ENCODE measurements at regions of chr20 and their contacts with region 1.

Region 1: DNA sequence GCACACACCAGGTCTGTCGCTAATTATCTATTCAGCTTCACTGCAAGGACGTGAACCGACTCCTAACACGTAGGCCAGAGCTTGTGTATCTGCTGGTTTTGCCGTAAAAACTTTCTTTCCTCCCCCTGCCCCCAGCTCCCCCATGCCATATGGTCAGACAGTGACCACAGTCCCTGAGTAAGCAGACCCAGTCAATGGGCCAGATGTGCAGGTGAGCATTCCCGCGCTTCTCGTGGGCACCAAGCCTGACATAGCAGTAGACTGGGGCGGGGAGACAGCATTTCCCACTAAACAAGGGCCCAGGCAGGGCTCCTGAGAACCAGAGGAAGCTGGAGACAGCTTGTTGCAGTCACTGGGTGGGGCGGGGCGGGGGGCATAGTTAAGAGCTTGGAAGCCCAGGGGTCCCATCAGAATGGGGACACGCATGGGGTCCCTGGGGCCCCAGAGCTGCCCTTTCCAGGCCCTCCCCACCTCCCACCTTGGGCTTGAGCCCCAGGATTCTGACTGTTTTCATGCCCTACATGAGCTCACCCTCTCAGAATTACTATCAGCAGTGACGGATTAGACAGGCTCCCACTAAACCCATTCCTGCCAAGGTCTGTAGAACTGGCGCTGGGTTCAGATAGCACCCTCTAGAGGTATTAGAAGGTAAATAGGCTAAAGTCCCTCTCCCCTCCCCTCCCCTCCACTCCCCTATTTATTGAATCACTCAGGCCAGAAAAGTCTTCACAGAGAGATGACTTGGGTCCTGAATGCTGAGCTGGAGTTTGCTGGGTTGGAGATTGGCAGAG is 51.8 kb downstream of the CDH26 start:
- DNase-seq: no peak
- ATAC-seq: peak; percentile 52; the same call in 2 of the 3 replicates
- H3K4me3 ChIP-seq: no peak overlapping the region
- H3K27ac ChIP-seq: no peak overlapping the region
- H3K4me1 ChIP-seq: no peaks in the 10 kb centered on the region
- H3K27me3 ChIP-seq: no peaks in the 10 kb centered on the region
- CTCF ChIP-seq: peak; percentile 8 to 34 (median 11); a peak in 3 of 6 replicates
- EP300 ChIP-seq: no peak
- POLR2A ChIP-seq: no peak
- RAD21 ChIP-seq: no peak

Region 2: DNA sequence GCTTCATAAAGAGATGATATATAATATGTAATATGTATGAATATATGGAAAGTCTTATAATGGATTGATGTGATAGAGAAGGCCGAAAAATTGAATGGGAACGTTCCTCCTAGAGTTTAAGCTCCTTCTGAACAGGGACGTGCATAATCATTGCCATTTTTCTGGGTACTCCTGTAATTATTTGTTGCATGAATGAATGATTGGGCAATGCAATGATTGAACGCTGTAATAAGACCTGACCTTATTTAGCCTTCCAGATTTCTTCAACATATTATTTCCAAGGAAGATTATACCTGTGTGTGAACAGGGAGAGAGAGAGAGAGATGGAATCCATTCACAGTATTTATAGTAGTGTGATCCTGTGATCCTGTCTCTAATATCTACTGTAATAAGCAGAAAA is 68.4 kb before region 1 on chr20:
- CTCF ChIA-PET with region 1: no interaction called
- POLR2A ChIA-PET with region 1: no interaction called
- RAD21 ChIA-PET with region 1: no interaction called
- SMC1A ChIA-PET with region 1: no interaction called
- in situ Hi-C with region 1: no loop called
- intact Hi-C with region 1: no loop called
- DNase-seq: no peak
- ATAC-seq: no peak
- H3K4me3 ChIP-seq: no peak overlapping the region; the same call in 1 of the 2 replicates
- H3K27ac ChIP-seq: no peak overlapping the region
- H3K4me1 ChIP-seq: peaks cover 10% of the 10 kb centered on the region
- H3K27me3 ChIP-seq: no peaks in the 10 kb centered on the region
- CTCF ChIP-seq: no peak
- EP300 ChIP-seq: no peak
- POLR2A ChIP-seq: no peak
- RAD21 ChIP-seq: no peak

Region 3: GRCh38 chr20:59992596-59992995 is 17.4 kb before region 1 on chr20:
- CTCF ChIA-PET with region 1: interaction called, 12 read pairs
- POLR2A ChIA-PET with region 1: no interaction called
- RAD21 ChIA-PET with region 1: no interaction called
- SMC1A ChIA-PET with region 1: no interaction called
- in situ Hi-C with region 1: no loop called
- intact Hi-C with region 1: no loop called
- DNase-seq: no peak
- ATAC-seq: no peak
- H3K4me3 ChIP-seq: no peak overlapping the region
- H3K27ac ChIP-seq: no peak overlapping the region
- H3K4me1 ChIP-seq: no peaks in the 10 kb centered on the region
- H3K27me3 ChIP-seq: no peaks in the 10 kb centered on the region
- CTCF ChIP-seq: 0 out of 6 replicates have a peak, but pooled peaks of 1 of the 3 experiments have one; percentile 8
- EP300 ChIP-seq: no peak
- POLR2A ChIP-seq: no peak
- RAD21 ChIP-seq: no peak

Region 4: DNA sequence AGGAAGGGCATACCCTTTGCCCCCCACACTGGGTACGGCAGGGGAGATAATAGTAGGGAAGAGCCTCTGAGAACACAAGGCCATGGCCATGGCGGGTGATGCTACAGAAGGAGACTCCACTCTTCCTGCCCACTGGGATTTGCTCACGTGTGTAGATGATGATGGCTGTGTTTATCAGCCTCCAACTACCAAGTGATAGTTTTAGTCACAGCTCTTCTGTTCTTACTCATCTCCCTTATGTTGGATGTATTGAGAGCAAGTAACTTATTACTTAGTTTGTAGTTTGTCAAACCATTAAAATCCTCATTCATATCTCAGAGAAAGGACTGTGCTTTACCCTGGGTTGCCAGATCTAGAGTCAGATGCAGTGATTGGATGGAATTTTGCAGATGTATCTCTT is 14.2 kb after region 1 on chr20:
- CTCF ChIA-PET with region 1: interaction called, 10 read pairs
- POLR2A ChIA-PET with region 1: interaction called, 3 read pairs
- RAD21 ChIA-PET with region 1: no interaction called
- SMC1A ChIA-PET with region 1: interaction called, 5 read pairs
- in situ Hi-C with region 1: no loop called
- intact Hi-C with region 1: no loop called
- DNase-seq: no peak
- ATAC-seq: no peak
- H3K4me3 ChIP-seq: no peak overlapping the region
- H3K27ac ChIP-seq: no peak overlapping the region
- H3K4me1 ChIP-seq: no peaks in the 10 kb centered on the region
- H3K27me3 ChIP-seq: no peaks in the 10 kb centered on the region
- CTCF ChIP-seq: no peak
- EP300 ChIP-seq: no peak
- POLR2A ChIP-seq: no peak
- RAD21 ChIP-seq: no peak